Endothelial cell of umbilical vein (primary cell): ENCODE measurements at regions of chr10 and their contacts with region 1.

Region 1: GRCh38 chr10:87861953-87862678 is 1.2 kb downstream of the KLLN start:
- DNase-seq: peak; percentile 93
- H3K4me3 ChIP-seq: peak overlapping the region; percentile 50 to 78 (median 65)
- H3K27ac ChIP-seq: peak overlapping the region; percentile 3
- H3K4me1 ChIP-seq: peaks cover 4% of the 10 kb centered on the region
- H3K27me3 ChIP-seq: no peaks in the 10 kb centered on the region
- CTCF ChIP-seq: no peak
- POLR2A ChIP-seq: peak; percentile 79

Region 2: GRCh38 chr10:87659571-87660483 is 202.3 kb before region 1 on chr10 and contains the start of gene PAPSS2:
- CTCF ChIA-PET with region 1: interaction called, 5 read pairs
- POLR2A ChIA-PET with region 1: no interaction called
- dilution Hi-C with region 1: no loop called
- intact Hi-C with region 1: loop called (anchors 1 kb)
- DNase-seq: peak; percentile 72
- H3K4me3 ChIP-seq: peak within 1 kb of the TSS; percentile 95 to 100 (median 99)
- H3K27ac ChIP-seq: peak within 1 kb of the TSS; percentile 96
- H3K4me1 ChIP-seq: peaks cover 56% of the 10 kb centered on the region
- H3K27me3 ChIP-seq: no peaks in the 10 kb centered on the region
- CTCF ChIP-seq: peak in 1 of 2 donors; percentile 31
- POLR2A ChIP-seq: peak; percentile 90
- total RNA-seq, gene PAPSS2: 82.6 and 93.2 TPM in 2 replicates

Region 3: DNA sequence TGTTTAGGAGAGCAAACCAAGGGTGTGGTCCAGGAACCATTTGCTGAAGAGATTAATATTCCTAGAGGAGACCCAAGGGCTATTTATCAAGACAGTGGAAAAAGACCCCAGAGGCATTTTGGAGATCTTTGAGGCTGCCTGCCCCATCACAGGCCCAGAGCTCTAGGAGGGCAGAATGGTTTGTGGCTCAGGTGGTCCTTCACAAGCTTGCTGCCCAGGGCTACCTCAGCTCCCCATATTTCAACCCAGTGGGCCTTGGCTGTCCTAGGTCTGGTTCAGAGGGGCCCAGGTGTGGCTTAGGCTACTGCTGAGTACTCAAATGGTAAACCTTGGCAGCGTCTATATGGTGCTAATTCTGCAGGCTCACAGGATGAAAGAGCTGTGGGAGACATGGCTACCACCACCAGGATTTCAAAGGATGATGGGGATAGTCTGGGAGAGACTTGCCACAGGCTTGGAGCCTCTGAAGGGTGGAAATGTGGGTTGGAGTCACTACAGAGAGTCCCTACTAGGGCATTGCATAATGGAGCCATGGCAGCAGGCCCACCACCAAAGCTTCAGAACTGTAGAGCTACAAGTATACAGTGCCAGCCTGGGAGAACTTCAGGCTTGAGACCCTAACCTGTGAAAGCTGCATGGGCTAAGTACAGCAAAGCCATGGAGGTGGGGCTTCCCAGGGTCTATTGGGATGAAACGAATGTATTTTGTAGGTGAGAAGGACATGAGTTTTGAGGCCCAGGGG is 25.6 kb after region 1 on chr10:
- CTCF ChIA-PET with region 1: no interaction called
- POLR2A ChIA-PET with region 1: no interaction called
- dilution Hi-C with region 1: no loop called
- intact Hi-C with region 1: no loop called
- DNase-seq: no peak
- H3K4me3 ChIP-seq: no peak overlapping the region
- H3K27ac ChIP-seq: no peak overlapping the region
- H3K4me1 ChIP-seq: no peaks in the 10 kb centered on the region
- H3K27me3 ChIP-seq: no peaks in the 10 kb centered on the region
- CTCF ChIP-seq: no peak
- POLR2A ChIP-seq: no peak

Region 4: GRCh38 chr10:87915989-87916388 is 53.9 kb after region 1 on chr10:
- CTCF ChIA-PET with region 1: no interaction called
- POLR2A ChIA-PET with region 1: interaction called, 5 read pairs
- dilution Hi-C with region 1: no loop called
- intact Hi-C with region 1: loop called (anchors 1 kb)
- DNase-seq: peak; percentile 94
- H3K4me3 ChIP-seq: peak overlapping the region in 1 of 3 experiments; percentile 5
- H3K27ac ChIP-seq: peak overlapping the region; percentile 68
- H3K4me1 ChIP-seq: peaks cover 57% of the 10 kb centered on the region
- H3K27me3 ChIP-seq: no peaks in the 10 kb centered on the region
- CTCF ChIP-seq: no peak
- POLR2A ChIP-seq: no peak

Region 5: DNA sequence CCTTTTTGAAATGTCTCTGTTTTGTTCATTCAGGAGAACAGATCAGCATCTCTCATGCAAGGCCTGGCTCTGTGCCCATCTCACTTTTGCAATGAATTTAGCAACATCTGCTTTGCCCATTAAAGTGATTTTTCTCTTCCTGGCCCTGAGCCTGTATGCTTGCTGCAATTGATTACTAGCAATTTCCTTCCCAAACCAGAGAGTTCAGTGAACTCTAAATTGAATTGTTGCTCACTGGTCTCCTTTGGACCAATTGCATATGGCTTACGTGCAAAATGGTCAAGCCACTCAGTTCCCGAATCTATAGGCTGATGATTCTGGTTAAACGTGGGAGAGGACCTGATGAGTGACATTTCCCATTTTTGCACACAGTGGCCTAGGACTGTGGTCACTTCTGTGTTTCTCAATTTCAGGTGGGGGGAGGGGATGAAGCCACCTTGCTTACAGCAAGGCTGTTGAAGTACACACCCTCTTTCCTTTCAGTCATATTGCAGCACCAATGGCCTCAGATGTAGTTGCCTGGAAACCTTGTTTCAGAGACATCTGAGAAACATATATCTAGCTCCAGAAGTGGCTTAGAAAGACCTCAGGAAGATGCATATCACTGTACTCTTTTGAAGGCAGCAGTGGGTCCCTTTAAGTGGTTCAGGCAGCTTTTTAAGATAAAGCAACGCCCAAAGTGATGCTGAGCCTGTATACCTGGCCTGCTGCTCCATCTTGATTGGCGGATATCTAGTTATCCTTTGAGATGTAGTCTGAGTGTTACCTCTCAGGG is 202.7 kb after region 1 on chr10:
- CTCF ChIA-PET with region 1: no interaction called
- POLR2A ChIA-PET with region 1: no interaction called
- dilution Hi-C with region 1: no loop called
- intact Hi-C with region 1: loop called (anchors 5 kb)
- DNase-seq: no peak
- H3K4me3 ChIP-seq: no peak overlapping the region
- H3K27ac ChIP-seq: no peak overlapping the region
- H3K4me1 ChIP-seq: peaks cover 9% of the 10 kb centered on the region
- H3K27me3 ChIP-seq: no peaks in the 10 kb centered on the region
- CTCF ChIP-seq: no peak
- POLR2A ChIP-seq: no peak

Region 6: DNA sequence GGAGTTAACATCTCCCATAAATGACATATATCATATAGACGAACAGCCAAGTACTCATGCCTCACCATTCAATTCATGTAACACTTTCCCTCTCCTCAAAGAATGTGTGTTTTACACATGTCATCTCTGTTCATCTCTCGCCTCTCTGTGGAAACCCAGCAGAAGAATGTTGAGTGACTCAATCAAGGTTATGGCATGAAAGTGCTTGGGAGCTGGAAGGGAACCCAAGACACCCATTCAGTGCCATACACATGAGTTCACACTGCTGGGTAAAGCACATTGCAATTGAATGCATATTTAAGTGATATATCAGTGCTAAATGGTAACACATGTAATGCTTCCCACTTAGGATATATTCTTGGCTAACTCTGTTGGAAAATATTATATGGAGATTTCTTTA is 324.2 kb after region 1 on chr10:
- CTCF ChIA-PET with region 1: no interaction called
- POLR2A ChIA-PET with region 1: no interaction called
- dilution Hi-C with region 1: no loop called
- intact Hi-C with region 1: no loop called
- DNase-seq: no peak
- H3K4me3 ChIP-seq: no peak overlapping the region
- H3K27ac ChIP-seq: no peak overlapping the region
- H3K4me1 ChIP-seq: no peaks in the 10 kb centered on the region
- H3K27me3 ChIP-seq: no peaks in the 10 kb centered on the region
- CTCF ChIP-seq: no peak
- POLR2A ChIP-seq: no peak

Region 7: DNA sequence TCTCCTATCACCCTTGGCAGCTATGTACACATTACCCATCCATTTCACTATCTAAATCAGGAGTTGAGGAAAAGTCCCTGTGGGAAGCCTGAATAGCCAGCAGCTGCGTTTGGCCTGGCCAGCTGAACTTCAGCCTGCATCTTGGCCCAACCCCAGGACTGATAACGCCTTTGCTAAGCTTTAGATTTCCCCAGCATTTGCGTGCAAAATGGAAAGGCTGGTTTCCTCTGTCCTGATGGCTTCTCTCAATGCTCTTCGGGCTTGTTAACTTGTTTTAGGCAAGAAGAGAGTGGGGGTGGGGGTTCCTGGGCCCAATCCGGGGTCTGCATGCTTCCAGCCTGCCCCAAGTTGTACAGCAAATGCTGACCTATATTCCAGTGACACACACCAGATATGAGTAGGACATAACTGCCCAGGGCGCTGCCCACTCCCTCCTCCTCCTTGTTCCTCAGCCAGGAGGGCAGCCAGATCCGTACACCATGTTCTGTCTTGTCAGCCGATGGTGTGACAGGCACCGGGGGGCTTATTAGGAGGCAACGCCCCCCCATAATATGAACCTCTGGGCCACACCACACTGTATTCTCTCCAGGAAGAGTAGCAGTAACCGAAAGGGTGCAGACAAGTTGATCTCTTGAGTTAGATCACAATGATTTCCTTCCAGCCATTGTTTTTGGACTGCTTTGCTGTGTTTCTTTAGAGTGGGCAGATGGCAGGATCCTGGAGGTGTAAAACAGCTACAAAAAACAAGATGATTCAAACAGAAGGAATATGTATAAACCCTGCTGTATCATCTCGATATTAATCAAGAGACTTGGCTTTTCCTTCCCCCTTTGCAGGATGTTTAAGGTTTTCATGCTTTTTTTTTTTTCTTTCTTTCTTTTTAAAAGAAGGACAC is 382.0 kb after region 1 on chr10:
- CTCF ChIA-PET with region 1: interaction called, 5 read pairs
- POLR2A ChIA-PET with region 1: no interaction called
- dilution Hi-C with region 1: no loop called
- intact Hi-C with region 1: loop called (anchors 1 kb)
- DNase-seq: peak; percentile 90
- H3K4me3 ChIP-seq: no peak overlapping the region
- H3K27ac ChIP-seq: peak overlapping the region; percentile 81
- H3K4me1 ChIP-seq: peaks cover 22% of the 10 kb centered on the region
- H3K27me3 ChIP-seq: no peaks in the 10 kb centered on the region
- CTCF ChIP-seq: no peak
- POLR2A ChIP-seq: no peak

Region 8: DNA sequence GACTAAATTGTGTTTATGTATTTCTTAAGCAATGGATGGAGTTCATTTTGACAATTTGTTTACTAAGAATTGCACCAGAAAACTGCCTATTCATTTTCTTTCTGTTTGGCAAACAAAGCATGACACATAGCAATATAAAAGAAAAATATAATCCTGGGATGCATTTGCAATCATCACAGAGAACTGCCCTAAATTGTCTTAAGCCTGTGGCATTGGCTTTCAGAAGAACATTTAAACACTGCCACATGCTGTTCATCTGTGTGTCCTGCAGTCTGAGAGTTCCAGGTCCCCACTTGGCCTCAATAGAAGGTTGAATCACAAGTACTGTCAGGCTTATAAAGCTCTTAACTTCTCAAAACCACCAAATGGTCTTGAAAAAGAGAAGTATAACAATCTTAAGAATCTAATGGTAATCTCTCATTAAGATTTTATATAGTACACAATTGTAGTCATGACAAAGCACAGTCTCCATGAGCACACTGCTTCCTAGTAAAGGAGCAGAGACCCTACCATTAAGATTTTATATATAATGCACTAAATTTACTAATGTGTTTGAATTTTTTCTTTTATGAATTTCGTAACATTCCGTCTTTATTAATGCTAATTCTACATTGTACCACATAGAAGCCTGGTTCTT is 691.1 kb after region 1 on chr10:
- CTCF ChIA-PET with region 1: interaction called, 5 read pairs
- POLR2A ChIA-PET with region 1: no interaction called
- dilution Hi-C with region 1: loop called (anchors 25 kb)
- intact Hi-C with region 1: no loop called
- DNase-seq: peak; percentile 76
- H3K4me3 ChIP-seq: no peak overlapping the region
- H3K27ac ChIP-seq: no peak overlapping the region
- H3K4me1 ChIP-seq: no peaks in the 10 kb centered on the region
- H3K27me3 ChIP-seq: no peaks in the 10 kb centered on the region
- CTCF ChIP-seq: peak; percentile 63 to 64
- POLR2A ChIP-seq: no peak